ENCODE measurements at regions of chr1 and their contacts with region 1.

Region 1: GRCh38 chr1:45011837-45012638 is at the start of gene UROD:
- DNase-seq: peak; percentile 97
- H3K4me3 ChIP-seq: peak within 1 kb of the TSS; percentile 85
- H3K27ac ChIP-seq: peak within 1 kb of the TSS; percentile 68
- H3K4me1 ChIP-seq: peaks cover 10% of the 10 kb centered on the region
- H3K27me3 ChIP-seq: no peaks in the 10 kb centered on the region
- CTCF ChIP-seq: no peak
- total RNA-seq, gene UROD: 85.8 and 89.3 TPM in 2 replicates

Region 2: GRCh38 chr1:44168520-44169098 is 843.4 kb before region 1 on chr1:
- CTCF ChIA-PET with region 1: no interaction called
- POLR2A ChIA-PET with region 1: no interaction called
- intact Hi-C with region 1: no loop called
- DNase-seq: no peak
- H3K4me3 ChIP-seq: no peak overlapping the region
- H3K27ac ChIP-seq: no peak overlapping the region
- H3K4me1 ChIP-seq: no peaks in the 10 kb centered on the region
- H3K27me3 ChIP-seq: no peaks in the 10 kb centered on the region
- CTCF ChIP-seq: no peak; the same call in 1 of the 2 replicates

Region 3: GRCh38 chr1:44747878-44748277 is 264.2 kb before region 1 on chr1:
- CTCF ChIA-PET with region 1: no interaction called
- POLR2A ChIA-PET with region 1: interaction called, 11 read pairs
- intact Hi-C with region 1: no loop called
- DNase-seq: peak; percentile 30
- H3K4me3 ChIP-seq: no peak overlapping the region
- H3K27ac ChIP-seq: no peak overlapping the region
- H3K4me1 ChIP-seq: peaks cover 7% of the 10 kb centered on the region
- H3K27me3 ChIP-seq: no peaks in the 10 kb centered on the region
- CTCF ChIP-seq: peak; percentile 37

Region 4: GRCh38 chr1:44842862-44843655 is 169.0 kb before region 1 on chr1 and contains the start of gene PTCH2:
- CTCF ChIA-PET with region 1: no interaction called
- POLR2A ChIA-PET with region 1: no interaction called
- intact Hi-C with region 1: loop called (anchors 2 kb)
- DNase-seq: peak; percentile 90
- H3K4me3 ChIP-seq: peak within 1 kb of the TSS; percentile 58
- H3K27ac ChIP-seq: peak within 1 kb of the TSS; percentile 49
- H3K4me1 ChIP-seq: no peaks in the 10 kb centered on the region
- H3K27me3 ChIP-seq: no peaks in the 10 kb centered on the region
- CTCF ChIP-seq: no peak
- total RNA-seq, gene PTCH2: 2.3 and 3.2 TPM in 2 replicates

Region 5: GRCh38 chr1:44884746-44885145 is 127.3 kb before region 1 on chr1:
- CTCF ChIA-PET with region 1: no interaction called
- POLR2A ChIA-PET with region 1: no interaction called
- intact Hi-C with region 1: no loop called
- DNase-seq: peak; percentile 16
- H3K4me3 ChIP-seq: no peak overlapping the region
- H3K27ac ChIP-seq: peak overlapping the region; percentile 16
- H3K4me1 ChIP-seq: peaks cover 3% of the 10 kb centered on the region
- H3K27me3 ChIP-seq: no peaks in the 10 kb centered on the region
- CTCF ChIP-seq: no peak

Region 6: GRCh38 chr1:45490626-45491486 is 478.8 kb after region 1 on chr1 and contains the start of gene TESK2:
- CTCF ChIA-PET with region 1: interaction called, 8 read pairs
- POLR2A ChIA-PET with region 1: no interaction called
- intact Hi-C with region 1: loop called (anchors 1 kb)
- DNase-seq: peak; percentile 99
- H3K4me3 ChIP-seq: peak within 1 kb of the TSS; percentile 56
- H3K27ac ChIP-seq: no peak within 1 kb of the TSS
- H3K4me1 ChIP-seq: peaks cover 3% of the 10 kb centered on the region
- H3K27me3 ChIP-seq: peaks cover 16% of the 10 kb centered on the region
- CTCF ChIP-seq: no peak
- total RNA-seq, gene TESK2: 0.75 and 2.7 TPM in 2 replicates